ENCODE measurements at regions of chr7 and their contacts with region 1.

Region 1: GRCh38 chr7:151244196-151244840 is 4.2 kb downstream of the SMARCD3 start:
- DNase-seq: peak in 1 of 2 donors; percentile 61
- ATAC-seq: peak; percentile 27

Region 2: GRCh38 chr7:151304856-151305255 is 60.5 kb after region 1 on chr7:
- intact Hi-C with region 1: loop called in 1 of 2 experiments (anchors 10 kb)
- DNase-seq: no peak
- ATAC-seq: no peak

Region 3: DNA sequence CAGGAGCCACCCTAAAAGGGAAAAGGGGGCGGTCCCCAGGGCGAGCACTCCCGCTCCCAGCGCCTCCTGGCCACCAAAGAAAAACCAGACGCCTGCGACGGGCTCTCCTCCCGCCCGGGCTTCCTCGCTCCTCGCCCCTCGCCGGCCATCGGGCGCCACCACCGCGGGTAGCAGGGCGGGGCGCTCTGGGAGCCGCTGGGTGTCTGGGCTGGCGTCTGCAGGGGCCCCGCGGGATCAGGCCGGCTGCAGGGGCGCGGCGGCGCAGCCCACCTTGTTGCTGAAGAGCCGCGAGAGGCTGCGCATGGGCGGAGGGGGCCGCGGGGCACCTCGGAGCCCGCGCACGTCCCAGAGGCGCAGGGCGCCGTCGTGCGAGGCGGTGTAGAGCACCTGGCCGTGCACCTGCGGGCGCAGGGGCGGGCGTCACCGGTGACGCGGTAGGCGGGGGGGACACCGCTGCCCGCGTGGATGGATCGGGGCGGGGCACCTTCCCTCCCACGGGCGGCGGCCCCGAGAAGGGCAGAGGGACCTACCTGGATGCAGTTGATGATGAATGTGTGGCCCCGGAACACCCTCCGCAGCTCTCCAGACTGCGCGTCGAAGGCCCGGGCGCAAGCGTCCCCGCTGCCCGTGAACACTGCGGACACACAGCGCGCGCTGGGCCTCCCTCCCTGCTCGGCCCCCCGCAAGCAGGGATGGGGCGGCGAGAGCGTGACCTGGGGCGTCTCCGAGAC is 137.2 kb after region 1 on chr7:
- intact Hi-C with region 1: no loop called
- DNase-seq: no peak
- ATAC-seq: peak; percentile 54